ENCODE measurements at regions of chr7 and their contacts with region 1.

Region 1: DNA sequence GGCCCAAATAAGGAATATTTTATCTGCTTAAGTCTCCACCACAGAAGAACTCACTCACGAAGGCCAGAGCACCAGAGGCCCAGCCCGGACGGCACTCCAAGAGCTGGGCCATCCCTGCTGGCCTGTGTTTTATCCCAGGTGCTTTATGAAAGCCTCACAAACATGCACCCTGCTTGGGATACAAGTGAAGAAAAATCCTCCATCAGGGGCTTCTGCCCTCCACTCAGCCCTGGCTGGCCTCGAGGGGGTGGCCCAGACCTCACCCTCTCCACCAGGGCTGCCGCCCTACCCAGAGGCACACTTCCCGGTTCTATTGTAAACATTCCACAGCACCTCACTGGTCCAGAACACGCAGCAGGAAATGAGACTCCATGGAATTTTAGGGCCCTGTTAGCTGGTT is 19.8 kb upstream of the DNAAF5 start:
- DNase-seq: no peak
- ATAC-seq: no peak
- H3K4me3 ChIP-seq: no peak overlapping the region
- H3K4me3 Mint-ChIP-seq: no peak overlapping the region
- H3K27ac ChIP-seq: no peak overlapping the region
- H3K27ac Mint-ChIP-seq: peak overlapping the region in 1 of 9 donors; percentile 48
- H3K4me1 ChIP-seq: no peaks in the 10 kb centered on the region
- H3K4me1 Mint-ChIP-seq: peaks cover 0 to 27% (median 12%) of the 10 kb centered on the region in 7 donors
- H3K27me3 ChIP-seq: no peaks in the 10 kb centered on the region
- H3K27me3 Mint-ChIP-seq: no peaks in the 10 kb centered on the region

Region 2: GRCh38 chr7:693280-693679 is 13.4 kb before region 1 on chr7:
- CTCF ChIA-PET with region 1: no interaction called
- POLR2A ChIA-PET with region 1: interaction called, 10 read pairs
- intact Hi-C with region 1: no loop called
- DNase-seq: no peak
- ATAC-seq: no peak
- H3K4me3 ChIP-seq: no peak overlapping the region
- H3K4me3 Mint-ChIP-seq: no peak overlapping the region
- H3K27ac ChIP-seq: no peak overlapping the region
- H3K27ac Mint-ChIP-seq: no peak overlapping the region
- H3K4me1 ChIP-seq: no peaks in the 10 kb centered on the region
- H3K4me1 Mint-ChIP-seq: peaks cover 0 to 9% (median 0%) of the 10 kb centered on the region in 7 donors
- H3K27me3 ChIP-seq: no peaks in the 10 kb centered on the region
- H3K27me3 Mint-ChIP-seq: no peaks in the 10 kb centered on the region

Region 3: GRCh38 chr7:1149351-1149794 is 442.7 kb after region 1 on chr7:
- CTCF ChIA-PET with region 1: no interaction called
- POLR2A ChIA-PET with region 1: no interaction called
- intact Hi-C with region 1: no loop called
- DNase-seq: no peak
- ATAC-seq: no peak
- H3K4me3 ChIP-seq: no peak overlapping the region
- H3K4me3 Mint-ChIP-seq: no peak overlapping the region
- H3K27ac ChIP-seq: no peak overlapping the region
- H3K27ac Mint-ChIP-seq: no peak overlapping the region
- H3K4me1 ChIP-seq: no peaks in the 10 kb centered on the region
- H3K4me1 Mint-ChIP-seq: peaks cover 0 to 7% (median 0%) of the 10 kb centered on the region in 7 donors
- H3K27me3 ChIP-seq: no peaks in the 10 kb centered on the region
- H3K27me3 Mint-ChIP-seq: no peaks in the 10 kb centered on the region

Measured in naive thymus-derived CD4-positive, alpha-beta T cell (primary cell).